Astrocyte of the cerebellum (primary cell): ENCODE measurements at regions of chr12 and their contacts with region 1.

Region 1: GRCh38 chr12:25875666-25876065 is 82.8 kb upstream of the RASSF8 start:
- DNase-seq: no peak
- H3K4me3 ChIP-seq: no peak overlapping the region
- CTCF ChIP-seq: no peak

Region 2: DNA sequence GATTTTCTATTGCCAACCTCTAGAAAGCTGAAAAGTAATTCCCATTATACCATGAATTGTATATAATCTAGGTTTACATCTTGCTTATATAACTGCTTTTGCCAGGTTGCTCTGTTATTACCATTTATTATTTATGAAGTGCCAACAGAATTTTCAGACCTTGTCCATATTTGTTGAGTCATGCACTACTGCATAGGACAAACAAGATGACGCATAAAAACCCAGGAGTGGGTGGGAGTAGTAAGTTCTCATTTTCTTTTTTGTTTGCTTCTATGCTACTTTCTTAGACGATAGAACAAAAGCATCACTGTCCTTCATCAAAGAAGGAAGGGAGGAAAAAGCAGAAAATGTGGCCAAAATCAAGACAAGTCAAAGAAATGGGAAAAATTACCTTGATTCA is 36.2 kb before region 1 on chr12:
- in situ Hi-C with region 1: no loop called
- DNase-seq: no peak
- H3K4me3 ChIP-seq: no peak overlapping the region
- CTCF ChIP-seq: no peak

Region 3: DNA sequence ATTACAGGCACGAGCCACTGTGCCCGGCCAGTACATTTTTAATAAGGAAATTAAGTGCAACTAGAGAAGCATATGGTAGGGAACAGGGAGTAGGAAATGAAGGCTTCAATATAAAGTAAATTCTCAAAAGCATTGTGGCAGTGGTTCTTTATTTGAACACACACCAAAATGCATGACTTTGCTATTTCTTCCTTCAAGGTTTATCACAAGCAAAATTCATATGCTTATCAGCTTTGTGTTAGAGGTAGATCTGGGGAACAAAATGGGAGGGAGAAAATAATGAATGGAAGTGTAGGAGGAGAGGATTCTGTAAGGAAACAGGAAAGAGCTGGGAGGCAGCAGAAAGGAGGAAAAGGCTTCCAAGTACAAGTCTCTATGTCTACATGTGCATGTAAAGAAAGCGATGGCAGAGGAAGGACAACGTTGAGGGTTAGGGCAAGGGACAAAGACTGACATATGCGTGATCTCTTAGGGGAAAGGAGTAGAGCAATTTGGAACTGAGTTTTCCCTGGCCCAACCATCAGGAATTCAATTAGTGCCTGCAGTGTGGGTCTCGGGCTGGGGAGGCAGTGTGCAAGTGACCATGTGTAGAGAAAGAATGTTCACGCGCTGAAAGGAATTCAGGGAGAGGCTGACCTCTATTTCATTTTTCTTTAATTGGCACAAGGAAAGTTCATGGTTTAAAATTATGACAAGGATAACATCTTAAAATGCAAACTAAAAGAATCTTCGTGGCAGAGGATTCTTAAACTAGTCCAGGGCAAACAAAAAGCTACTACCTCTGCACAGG is 59.9 kb after region 1 on chr12:
- in situ Hi-C with region 1: loop called (anchors 5 kb)
- DNase-seq: no peak
- H3K4me3 ChIP-seq: no peak overlapping the region
- CTCF ChIP-seq: no peak